Activated T-helper 2 cell treated with anti-CD3 and anti-CD28 coated beads, Interferon-gamma antibody, Interleukin-2, Interleukin-4, amounts not matched to agents 10 μg/mL and 5 μg/mL and 100 μg/mL, durations not matched to agents 14 hours and 24 hours and 36 hours (primary cell): ENCODE measurements at regions of chr3 and their contacts with region 1.

Region 1: DNA sequence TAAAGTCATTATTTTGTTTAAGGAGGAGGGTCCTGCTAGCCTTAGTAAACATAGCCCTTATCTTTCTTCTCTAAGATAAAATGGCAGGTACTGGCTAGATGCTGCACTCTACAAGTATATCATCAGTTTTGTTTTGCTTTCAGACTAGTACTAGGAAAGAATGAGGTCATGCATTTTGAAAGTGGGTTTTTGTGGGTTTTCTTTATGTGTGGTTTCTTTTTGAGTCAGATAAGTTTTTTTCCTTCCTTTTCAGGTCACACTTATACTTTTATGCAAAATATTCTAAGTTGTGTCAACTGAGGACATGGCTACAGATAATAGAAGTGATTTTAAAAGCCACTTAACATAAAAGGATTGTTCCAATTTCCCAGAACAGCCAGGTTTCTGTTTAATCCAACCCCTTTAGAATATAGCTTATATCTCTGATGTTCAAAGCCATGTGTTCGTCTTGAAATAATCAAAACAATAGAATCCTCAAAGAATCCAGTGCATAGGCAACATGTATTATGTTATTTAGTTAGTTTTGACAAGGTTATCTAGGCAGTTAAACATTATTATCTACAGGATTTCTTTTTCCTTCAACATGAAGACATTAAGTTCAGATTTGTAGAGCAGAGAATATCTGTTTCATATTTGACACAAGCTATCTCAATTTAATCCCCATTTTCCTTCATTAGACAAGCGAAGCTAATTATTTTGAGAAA is 406.2 kb downstream of the RBMS3 start:
- DNase-seq: no peak
- H3K4me3 Mint-ChIP-seq: no peak overlapping the region
- H3K27ac Mint-ChIP-seq: no peak overlapping the region
- H3K4me1 Mint-ChIP-seq: peaks cover 6% of the 10 kb centered on the region
- H3K27me3 Mint-ChIP-seq: peaks cover 5% of the 10 kb centered on the region

Region 2: GRCh38 chr3:29936054-29936453 is 249.0 kb after region 1 on chr3:
- intact Hi-C with region 1: loop called (anchors 5 kb)
- DNase-seq: no peak
- H3K4me3 Mint-ChIP-seq: no peak overlapping the region
- H3K27ac Mint-ChIP-seq: peak overlapping the region; percentile 65
- H3K4me1 Mint-ChIP-seq: peaks cover 27% of the 10 kb centered on the region
- H3K27me3 Mint-ChIP-seq: peaks cover 15% of the 10 kb centered on the region

Region 3: DNA sequence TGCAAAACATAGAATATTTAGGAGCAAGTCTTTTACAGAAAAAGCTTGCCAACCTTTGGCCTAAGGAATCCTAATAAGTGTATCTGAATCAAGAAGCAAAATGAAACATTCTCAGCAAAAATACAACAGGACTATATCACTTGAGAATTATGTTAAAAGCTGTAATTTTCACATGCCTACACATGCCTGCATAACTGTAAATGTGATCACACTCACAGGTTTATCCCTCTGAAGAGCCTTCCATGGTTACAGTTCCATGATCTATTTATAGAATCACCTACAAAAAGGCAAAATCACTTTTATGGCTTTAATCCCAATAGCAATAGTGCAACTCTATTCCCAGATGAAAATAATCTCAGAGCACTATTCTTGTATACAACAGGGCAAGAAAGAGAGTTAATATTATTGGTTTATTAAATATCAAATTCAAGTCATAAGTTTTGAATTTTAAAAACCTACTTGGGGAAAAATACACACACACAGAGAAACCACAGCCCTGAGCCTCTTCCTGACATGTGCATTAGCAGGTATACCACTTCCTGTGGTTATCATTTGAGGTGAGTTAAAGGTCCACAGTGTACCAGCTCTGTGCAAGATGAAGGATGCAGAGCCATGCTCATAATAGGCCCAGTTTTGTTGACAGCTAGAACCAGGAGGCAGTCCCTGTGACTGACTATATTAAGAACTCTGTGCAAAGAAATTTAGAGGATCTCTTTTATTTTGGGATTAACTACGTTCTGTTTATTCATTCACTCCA is 666.8 kb after region 1 on chr3:
- intact Hi-C with region 1: loop called (anchors 5 kb)
- DNase-seq: peak; percentile 68
- H3K4me3 Mint-ChIP-seq: peak overlapping the region; percentile 26
- H3K27ac Mint-ChIP-seq: no peak overlapping the region
- H3K4me1 Mint-ChIP-seq: peaks cover 67% of the 10 kb centered on the region
- H3K27me3 Mint-ChIP-seq: peaks cover 13% of the 10 kb centered on the region